ENCODE measurements at regions of chr12 and their contacts with region 1.

Region 1: GRCh38 chr12:49707128-49707811 is at the start of gene FMNL3:
- DNase-seq: peak; percentile 99
- ATAC-seq: peak; percentile 92
- H3K4me3 Mint-ChIP-seq: peak within 1 kb of the TSS; percentile 92
- H3K27ac Mint-ChIP-seq: peak within 1 kb of the TSS; percentile 83
- H3K4me1 Mint-ChIP-seq: peaks cover 43% of the 10 kb centered on the region
- H3K27me3 Mint-ChIP-seq: peaks cover 5% of the 10 kb centered on the region
- total RNA-seq, gene FMNL3: 23.2 to 24.3 TPM

Region 2: GRCh38 chr12:49567611-49568441 is 139.4 kb before region 1 on chr12 and contains the start of gene MCRS1:
- CTCF ChIA-PET with region 1: no interaction called
- POLR2A ChIA-PET with region 1: no interaction called
- intact Hi-C with region 1: loop called in 1 of 2 experiments (anchors 1 kb)
- DNase-seq: peak; percentile 93
- ATAC-seq: peak; percentile 88
- H3K4me3 Mint-ChIP-seq: peak within 1 kb of the TSS; percentile 90
- H3K27ac Mint-ChIP-seq: peak within 1 kb of the TSS; percentile 95
- H3K4me1 Mint-ChIP-seq: peaks cover 37% of the 10 kb centered on the region
- H3K27me3 Mint-ChIP-seq: no peaks in the 10 kb centered on the region
- total RNA-seq, gene MCRS1: 48.2 to 58.2 TPM

Region 3: GRCh38 chr12:49662998-49663843 is 44.0 kb before region 1 on chr12:
- CTCF ChIA-PET with region 1: interaction called, 332 read pairs
- POLR2A ChIA-PET with region 1: interaction called, 4 read pairs
- intact Hi-C with region 1: loop called (anchors 1 kb)
- DNase-seq: peak; percentile 85
- ATAC-seq: peak; percentile 78
- H3K4me3 Mint-ChIP-seq: peak overlapping the region; percentile 58
- H3K27ac Mint-ChIP-seq: peak overlapping the region; percentile 95
- H3K4me1 Mint-ChIP-seq: peaks cover 78% of the 10 kb centered on the region
- H3K27me3 Mint-ChIP-seq: no peaks in the 10 kb centered on the region

Region 4: GRCh38 chr12:49740930-49741881 is 33.9 kb after region 1 on chr12 and contains the start of gene TMBIM6:
- CTCF ChIA-PET with region 1: interaction called, 12 read pairs
- POLR2A ChIA-PET with region 1: interaction called, 5 read pairs
- intact Hi-C with region 1: loop called (anchors 1 kb)
- DNase-seq: peak; percentile 99
- ATAC-seq: peak; percentile 93
- H3K4me3 Mint-ChIP-seq: peak within 1 kb of the TSS; percentile 89
- H3K27ac Mint-ChIP-seq: peak within 1 kb of the TSS; percentile 100
- H3K4me1 Mint-ChIP-seq: peaks cover 45% of the 10 kb centered on the region
- H3K27me3 Mint-ChIP-seq: no peaks in the 10 kb centered on the region
- total RNA-seq, gene TMBIM6: 378 to 450 TPM

Region 5: GRCh38 chr12:49818241-49818895 is 111.1 kb after region 1 on chr12:
- CTCF ChIA-PET with region 1: no interaction called
- POLR2A ChIA-PET with region 1: no interaction called
- intact Hi-C with region 1: no loop called
- DNase-seq: no peak
- ATAC-seq: no peak
- H3K4me3 Mint-ChIP-seq: no peak overlapping the region
- H3K27ac Mint-ChIP-seq: no peak overlapping the region
- H3K4me1 Mint-ChIP-seq: peaks cover 22% of the 10 kb centered on the region
- H3K27me3 Mint-ChIP-seq: no peaks in the 10 kb centered on the region

Region 6: DNA sequence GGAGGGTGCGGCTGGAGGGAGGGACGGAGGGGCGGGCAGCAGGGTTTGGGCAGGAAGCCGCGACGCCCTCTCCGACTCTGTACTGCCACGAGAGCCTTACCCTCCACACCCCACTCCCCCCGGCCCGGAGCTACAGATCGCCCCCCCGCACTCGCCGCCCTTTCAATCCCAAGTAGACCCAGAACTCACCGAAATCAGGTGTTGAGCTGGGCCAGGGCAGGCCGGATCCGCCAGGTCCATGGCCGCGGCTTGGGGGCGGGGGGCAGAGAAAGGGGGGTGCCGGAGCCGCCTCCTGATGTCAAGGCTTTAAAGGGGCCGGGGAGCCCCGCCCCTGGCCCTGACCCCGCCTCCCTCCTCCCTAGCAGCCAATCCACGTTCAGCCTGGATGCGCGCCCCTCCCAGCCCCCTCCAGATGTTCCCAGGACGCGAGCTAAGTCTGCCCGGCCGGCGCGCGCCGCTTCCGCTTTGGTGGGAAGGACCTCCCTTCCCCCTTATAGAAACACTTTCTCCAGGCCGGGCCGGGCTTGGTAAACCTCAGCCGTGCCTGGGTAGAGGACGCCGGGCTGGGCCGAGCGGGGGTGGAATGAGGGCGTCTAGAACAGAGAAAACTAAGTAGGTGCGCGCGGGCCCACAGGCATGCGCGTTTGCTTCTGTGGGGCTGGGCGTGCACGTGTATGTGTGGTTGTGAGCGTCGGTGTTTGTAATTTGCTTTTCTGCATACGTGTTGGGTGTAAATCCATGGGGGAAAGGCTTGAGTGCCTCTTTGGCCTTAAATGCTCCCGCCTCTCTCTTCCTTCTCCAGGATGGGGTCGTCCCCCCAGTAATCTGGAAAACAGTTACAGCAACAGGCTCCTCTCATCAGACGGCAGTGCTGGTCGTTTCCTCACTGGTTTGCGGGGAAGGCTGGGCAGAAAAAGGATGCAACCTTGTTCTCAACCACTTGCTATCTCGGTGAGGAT is 121.1 kb after region 1 on chr12 and contains the start of gene NCKAP5L:
- CTCF ChIA-PET with region 1: interaction called, 3 read pairs
- POLR2A ChIA-PET with region 1: no interaction called
- intact Hi-C with region 1: loop called in 1 of 2 experiments (anchors 1 kb)
- DNase-seq: peak; percentile 97
- ATAC-seq: peak; percentile 99
- H3K4me3 Mint-ChIP-seq: peak within 1 kb of the TSS; percentile 86
- H3K27ac Mint-ChIP-seq: peak within 1 kb of the TSS; percentile 90
- H3K4me1 Mint-ChIP-seq: peaks cover 27% of the 10 kb centered on the region
- H3K27me3 Mint-ChIP-seq: no peaks in the 10 kb centered on the region
- total RNA-seq, gene NCKAP5L: 4.3 to 4.5 TPM

Region 7: DNA sequence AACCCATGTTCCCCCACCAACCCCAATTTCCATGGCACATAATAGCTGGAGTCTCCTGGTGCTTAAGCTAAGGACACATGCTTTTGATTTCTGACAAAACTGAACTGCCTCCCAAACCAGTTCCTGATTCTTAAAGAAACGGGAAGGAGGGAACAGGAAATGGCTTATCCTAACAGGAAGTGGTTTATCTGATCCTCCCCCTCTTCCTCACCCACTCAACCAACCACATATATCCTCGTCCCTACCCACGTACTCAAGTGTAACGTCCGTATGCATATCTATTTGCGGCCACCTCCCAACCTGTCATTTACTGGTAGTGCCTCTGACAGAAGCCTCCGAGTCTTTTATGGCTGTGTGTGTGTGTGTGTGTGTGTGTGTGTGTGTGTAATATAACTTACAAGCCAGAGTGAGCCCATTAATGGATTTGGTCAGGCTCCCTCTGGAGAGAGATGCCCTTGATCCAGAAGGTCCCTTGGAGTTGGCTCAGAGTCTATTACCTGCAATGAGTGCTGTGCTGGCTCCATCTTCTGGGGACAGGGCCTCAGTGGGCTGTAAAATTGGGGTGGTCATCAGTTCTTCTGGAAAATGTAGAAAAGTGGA is 1539.1 kb after region 1 on chr12:
- CTCF ChIA-PET with region 1: no interaction called
- POLR2A ChIA-PET with region 1: no interaction called
- intact Hi-C with region 1: no loop called
- DNase-seq: peak; percentile 58
- ATAC-seq: peak; percentile 74
- H3K4me3 Mint-ChIP-seq: peak overlapping the region; percentile 36
- H3K27ac Mint-ChIP-seq: peak overlapping the region; percentile 74
- H3K4me1 Mint-ChIP-seq: peaks cover 49% of the 10 kb centered on the region
- H3K27me3 Mint-ChIP-seq: no peaks in the 10 kb centered on the region

Measured in activated CD4-positive, alpha-beta T cell treated with anti-CD3 and anti-CD28 coated beads for 36 hours (primary cell).